ENCODE measurements at regions of chr9 and their contacts with region 1.

Region 1: GRCh38 chr9:18442629-18443491 is 31.1 kb upstream of the ADAMTSL1 start:
- DNase-seq: peak; percentile 74
- ATAC-seq: peak; percentile 75

Region 2: DNA sequence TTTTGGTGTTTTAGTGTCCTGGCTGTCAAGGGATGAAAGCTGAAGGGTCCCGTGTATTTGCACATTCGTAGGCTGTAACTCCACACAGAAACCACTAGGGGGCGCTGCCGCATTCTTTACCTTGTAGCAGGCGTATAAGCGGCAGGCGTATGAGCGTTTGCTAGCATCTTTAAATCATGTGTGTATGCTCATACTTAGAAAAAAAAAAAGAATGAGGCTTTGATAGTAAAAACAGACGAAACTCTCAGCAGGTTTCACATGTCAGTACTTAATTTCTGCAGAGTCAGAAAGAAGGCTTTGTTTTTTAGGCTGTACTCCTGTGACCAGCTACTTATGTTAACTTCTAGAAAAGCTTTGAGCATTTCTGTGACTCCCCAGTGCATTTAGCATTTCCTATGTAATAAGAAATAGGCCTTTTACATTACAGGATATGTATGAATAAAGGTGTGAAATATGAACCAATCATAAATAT is 187.7 kb before region 1 on chr9:
- intact Hi-C with region 1: loop called (anchors 2 kb)
- DNase-seq: peak; percentile 78
- ATAC-seq: peak; percentile 85

Region 3: GRCh38 chr9:19028835-19029451 is 586.1 kb after region 1 on chr9:
- intact Hi-C with region 1: loop called (anchors 10 kb)
- DNase-seq: peak; percentile 46
- ATAC-seq: peak; percentile 68

Measured in left ventricle myocardium superior (tissue), 1 donor.